GM12878 (cell line): ENCODE measurements at regions of chr9 and their contacts with region 1.

Region 1: DNA sequence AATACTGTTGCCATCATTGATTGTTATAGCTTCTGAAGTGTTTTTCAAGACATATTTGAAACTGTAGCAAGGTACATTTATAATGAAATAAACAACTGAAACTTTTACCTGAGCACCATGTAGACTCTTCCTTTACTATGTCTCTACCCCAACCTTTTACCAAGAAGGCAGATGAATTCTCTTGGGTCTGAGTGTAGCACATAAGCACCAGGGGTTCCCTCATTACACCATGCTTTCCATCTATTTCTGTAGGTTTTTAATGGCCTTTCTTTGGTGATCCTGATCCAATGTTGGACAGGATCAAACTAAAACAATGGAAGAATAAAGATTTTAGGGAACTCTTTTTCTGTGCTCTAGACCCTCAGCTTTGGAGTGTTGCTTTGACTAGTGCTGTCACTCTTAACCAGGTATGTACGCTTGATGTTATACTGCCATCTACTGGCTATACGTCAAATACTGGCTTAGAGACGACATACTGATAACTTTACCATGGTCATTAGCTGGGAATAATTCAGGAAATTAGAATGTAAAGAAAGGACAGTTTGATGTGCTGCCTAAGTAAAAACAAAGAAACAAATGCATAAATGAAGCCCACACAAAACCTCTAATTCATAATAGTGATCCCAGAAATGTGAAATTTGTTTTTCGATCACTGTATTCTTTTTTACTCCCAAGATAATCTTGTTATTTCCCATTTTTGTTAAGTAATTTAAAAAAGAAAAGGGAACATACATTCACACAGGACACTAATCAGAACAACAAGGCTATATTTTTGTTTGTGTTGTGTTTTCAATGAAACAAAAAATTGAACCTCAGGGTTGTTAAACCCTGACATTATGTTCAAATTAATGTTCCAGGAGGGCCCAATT is 30.7 kb downstream of the IFNW1 start:
- DNase-seq: peak; percentile 44
- ATAC-seq: peak; percentile 99
- H3K4me3 ChIP-seq: no peak overlapping the region
- H3K27ac ChIP-seq: no peak overlapping the region
- H3K4me1 ChIP-seq: no peaks in the 10 kb centered on the region
- H3K27me3 ChIP-seq: no peaks in the 10 kb centered on the region
- CTCF ChIP-seq: peak; percentile 77 to 87 (median 78)
- EP300 ChIP-seq: no peak
- POLR2A ChIP-seq: no peak
- RAD21 ChIP-seq: peak; percentile 97

Region 2: DNA sequence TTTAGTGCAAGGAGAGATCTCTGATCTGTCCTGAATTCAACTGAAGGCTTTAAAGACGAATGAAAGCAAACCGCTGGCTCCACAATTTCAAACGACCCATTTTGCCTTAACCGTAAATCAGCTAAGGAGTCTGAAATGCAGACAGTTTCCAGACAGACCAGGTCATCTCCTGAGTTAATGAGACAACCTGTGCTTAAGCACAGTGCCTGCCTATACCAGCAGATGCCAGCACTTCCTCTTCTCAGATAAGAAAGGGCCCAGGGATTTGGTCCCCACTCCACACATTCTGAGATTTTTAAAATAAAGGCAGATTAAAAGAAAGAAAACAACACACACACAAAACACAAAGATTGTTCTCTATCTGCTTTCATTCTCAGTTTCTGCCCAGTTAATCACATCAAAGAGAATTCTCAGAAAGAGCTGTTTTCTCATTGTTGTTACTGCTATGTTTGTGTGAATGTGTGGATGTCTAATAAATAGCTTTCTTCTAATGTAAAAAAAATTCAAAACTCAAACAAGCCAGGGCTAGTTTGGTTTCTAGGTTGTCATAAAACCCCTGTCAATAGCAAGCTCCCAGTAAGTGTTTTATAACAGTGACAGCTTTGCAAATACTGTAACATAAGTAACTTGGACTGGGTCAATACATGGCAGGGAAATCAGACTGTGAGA is 1164.4 kb before region 1 on chr9:
- CTCF ChIA-PET with region 1: interaction called, 11 read pairs
- POLR2A ChIA-PET with region 1: no interaction called
- RAD21 ChIA-PET with region 1: interaction called, 10 read pairs
- SMC1A ChIA-PET with region 1: interaction called, 8 read pairs
- in situ Hi-C with region 1: no loop called
- intact Hi-C with region 1: no loop called
- DNase-seq: no peak
- ATAC-seq: peak; percentile 95
- H3K4me3 ChIP-seq: no peak overlapping the region
- H3K27ac ChIP-seq: no peak overlapping the region
- H3K4me1 ChIP-seq: no peaks in the 10 kb centered on the region
- H3K27me3 ChIP-seq: no peaks in the 10 kb centered on the region
- CTCF ChIP-seq: peak; percentile 42 to 51 (median 47); a peak in 5 of 6 replicates
- EP300 ChIP-seq: no peak
- POLR2A ChIP-seq: no peak
- RAD21 ChIP-seq: peak; percentile 65

Region 3: GRCh38 chr9:20884985-20885593 is 225.9 kb before region 1 on chr9:
- CTCF ChIA-PET with region 1: interaction called, 48 read pairs
- POLR2A ChIA-PET with region 1: no interaction called
- RAD21 ChIA-PET with region 1: interaction called, 18 read pairs
- SMC1A ChIA-PET with region 1: interaction called, 32 read pairs
- in situ Hi-C with region 1: loop called (anchors 25 kb)
- intact Hi-C with region 1: loop called (anchors 2 kb)
- DNase-seq: peak; percentile 15
- ATAC-seq: peak; percentile 89
- H3K4me3 ChIP-seq: no peak overlapping the region
- H3K27ac ChIP-seq: no peak overlapping the region
- H3K4me1 ChIP-seq: no peaks in the 10 kb centered on the region
- H3K27me3 ChIP-seq: no peaks in the 10 kb centered on the region
- CTCF ChIP-seq: peak; percentile 52 to 56 (median 52)
- EP300 ChIP-seq: no peak
- POLR2A ChIP-seq: no peak
- RAD21 ChIP-seq: peak; percentile 27; the same call in 1 of the 2 replicates

Region 4: GRCh38 chr9:20962536-20963225 is 148.3 kb before region 1 on chr9:
- CTCF ChIA-PET with region 1: interaction called, 8 read pairs
- POLR2A ChIA-PET with region 1: no interaction called
- RAD21 ChIA-PET with region 1: no interaction called
- SMC1A ChIA-PET with region 1: no interaction called
- in situ Hi-C with region 1: no loop called
- intact Hi-C with region 1: loop called (anchors 5 kb)
- DNase-seq: no peak
- ATAC-seq: no peak
- H3K4me3 ChIP-seq: no peak overlapping the region
- H3K27ac ChIP-seq: no peak overlapping the region
- H3K4me1 ChIP-seq: no peaks in the 10 kb centered on the region; the same call in 1 of the 2 replicates
- H3K27me3 ChIP-seq: no peaks in the 10 kb centered on the region
- CTCF ChIP-seq: no peak
- EP300 ChIP-seq: no peak
- POLR2A ChIP-seq: no peak
- RAD21 ChIP-seq: no peak

Region 5: DNA sequence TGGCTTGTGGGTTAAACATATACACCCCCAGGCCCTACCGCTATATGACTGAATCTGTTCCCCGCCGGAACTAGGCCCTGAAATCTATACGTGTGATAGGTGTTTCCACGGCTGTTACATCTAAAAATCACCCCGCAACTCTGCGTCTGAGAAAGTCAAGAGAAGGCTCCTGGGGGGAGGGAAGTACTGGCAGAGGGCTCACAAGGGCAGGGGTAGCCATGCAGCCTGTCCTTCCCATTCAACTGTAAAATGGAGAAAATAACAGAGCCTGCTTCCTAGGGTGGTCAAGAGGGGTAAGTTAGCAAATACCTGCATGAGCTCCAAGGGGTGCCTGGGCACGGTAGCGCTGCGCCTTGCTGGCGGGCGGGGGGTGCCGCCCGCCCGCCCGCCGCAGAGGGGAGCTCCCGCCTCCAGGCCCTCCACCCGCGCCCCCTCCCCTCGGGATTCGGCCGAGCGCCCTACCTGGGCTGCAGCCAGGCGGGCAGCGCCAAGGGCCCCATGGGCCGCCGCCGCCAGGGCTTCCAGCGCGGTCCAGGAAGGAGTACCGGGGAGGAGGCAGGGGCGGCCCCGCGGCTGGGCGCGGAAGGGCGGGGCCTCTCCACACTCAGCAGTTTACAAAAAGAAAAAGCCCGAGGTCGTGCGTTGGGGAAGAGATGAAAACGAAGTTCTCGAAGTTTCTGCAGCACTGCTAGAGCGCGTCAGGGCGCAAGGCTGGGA is 79.7 kb before region 1 on chr9 and contains the start of gene HACD4:
- CTCF ChIA-PET with region 1: interaction called, 11 read pairs
- POLR2A ChIA-PET with region 1: no interaction called
- RAD21 ChIA-PET with region 1: interaction called, 3 read pairs
- SMC1A ChIA-PET with region 1: no interaction called
- in situ Hi-C with region 1: no loop called
- intact Hi-C with region 1: no loop called
- DNase-seq: peak; percentile 27
- ATAC-seq: peak; percentile 90
- H3K4me3 ChIP-seq: peak within 1 kb of the TSS; percentile 81
- H3K27ac ChIP-seq: peak within 1 kb of the TSS; percentile 62
- H3K4me1 ChIP-seq: peaks cover 5% of the 10 kb centered on the region
- H3K27me3 ChIP-seq: no peaks in the 10 kb centered on the region
- CTCF ChIP-seq: no peak
- EP300 ChIP-seq: no peak
- POLR2A ChIP-seq: peak; percentile 75
- RAD21 ChIP-seq: no peak
- polyA plus RNA-seq, gene HACD4: 3.2 to 3.3 TPM

Region 6: DNA sequence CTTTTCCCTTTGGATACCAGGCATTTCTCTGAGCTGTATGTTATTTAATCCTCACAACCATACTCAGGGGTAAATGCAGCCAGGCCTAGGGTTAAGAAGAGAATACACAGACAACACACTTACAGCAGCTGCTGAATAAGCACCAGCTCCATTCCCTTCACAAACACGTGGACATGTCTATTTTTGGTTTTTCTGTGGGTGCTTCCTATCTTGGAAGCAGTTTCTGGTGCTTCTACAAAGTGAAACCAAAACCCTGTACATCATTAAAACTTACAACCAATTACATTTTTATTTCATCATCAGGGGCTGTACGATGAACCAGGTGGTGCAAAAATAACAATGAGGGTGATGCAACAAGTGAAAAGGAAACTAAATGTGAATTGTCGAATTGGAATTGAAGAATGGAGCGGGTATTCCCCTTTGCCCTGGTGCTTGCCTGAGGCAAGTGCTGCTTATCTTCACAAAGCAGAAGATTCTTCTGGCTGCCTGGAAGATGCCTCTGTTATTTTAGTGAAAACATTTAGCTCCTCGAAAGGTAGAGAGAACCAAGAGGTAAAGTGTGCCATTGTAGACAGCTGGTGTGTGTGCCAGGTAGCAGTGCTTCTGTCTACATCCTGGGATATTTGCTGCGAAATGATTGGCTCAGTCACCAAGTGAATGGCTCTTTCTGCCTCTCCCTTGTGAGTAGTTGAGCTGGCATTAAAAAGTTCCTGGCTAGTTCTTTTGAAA is 14.6 kb before region 1 on chr9:
- CTCF ChIA-PET with region 1: interaction called, 12 read pairs
- POLR2A ChIA-PET with region 1: no interaction called
- RAD21 ChIA-PET with region 1: interaction called, 5 read pairs
- SMC1A ChIA-PET with region 1: interaction called, 11 read pairs
- in situ Hi-C with region 1: no loop called
- intact Hi-C with region 1: no loop called
- DNase-seq: peak; percentile 46
- ATAC-seq: peak; percentile 95
- H3K4me3 ChIP-seq: peak overlapping the region; percentile 13; the same call in 1 of the 2 replicates
- H3K27ac ChIP-seq: peak overlapping the region; percentile 6; the same call in 1 of the 2 replicates
- H3K4me1 ChIP-seq: peaks cover 6% of the 10 kb centered on the region
- H3K27me3 ChIP-seq: no peaks in the 10 kb centered on the region
- CTCF ChIP-seq: no peak
- EP300 ChIP-seq: no peak
- POLR2A ChIP-seq: 0 out of 2 replicates have a peak, but pooled peaks have one; percentile 19
- RAD21 ChIP-seq: no peak

Region 7: DNA sequence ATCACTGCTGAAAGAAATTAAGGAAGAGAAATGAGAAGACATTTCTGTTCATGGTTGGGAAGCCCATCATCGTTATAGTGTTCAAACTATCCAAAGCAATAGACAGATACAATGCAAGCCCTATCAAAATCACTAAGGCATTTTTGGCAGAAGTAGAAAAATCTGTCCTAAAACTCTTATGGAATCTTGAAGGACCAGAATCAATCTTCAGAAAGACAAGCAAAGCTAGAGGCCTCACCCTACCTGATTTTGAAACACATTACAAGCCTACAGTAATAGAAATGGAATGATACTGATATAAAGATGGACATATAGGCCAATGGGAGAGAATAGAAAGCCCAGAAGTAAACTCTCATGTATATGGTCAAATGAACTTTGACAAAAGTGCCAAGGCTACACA is 60.4 kb after region 1 on chr9:
- CTCF ChIA-PET with region 1: no interaction called
- POLR2A ChIA-PET with region 1: no interaction called
- RAD21 ChIA-PET with region 1: no interaction called
- SMC1A ChIA-PET with region 1: no interaction called
- in situ Hi-C with region 1: no loop called
- intact Hi-C with region 1: no loop called
- DNase-seq: no peak
- ATAC-seq: no peak
- H3K4me3 ChIP-seq: no peak overlapping the region
- H3K27ac ChIP-seq: no peak overlapping the region
- H3K4me1 ChIP-seq: no peaks in the 10 kb centered on the region
- H3K27me3 ChIP-seq: no peaks in the 10 kb centered on the region; a peak in 1 of 4 replicates
- CTCF ChIP-seq: no peak
- EP300 ChIP-seq: no peak
- POLR2A ChIP-seq: no peak
- RAD21 ChIP-seq: no peak